ENCODE measurements at regions of chr1 and their contacts with region 1.

Region 1: DNA sequence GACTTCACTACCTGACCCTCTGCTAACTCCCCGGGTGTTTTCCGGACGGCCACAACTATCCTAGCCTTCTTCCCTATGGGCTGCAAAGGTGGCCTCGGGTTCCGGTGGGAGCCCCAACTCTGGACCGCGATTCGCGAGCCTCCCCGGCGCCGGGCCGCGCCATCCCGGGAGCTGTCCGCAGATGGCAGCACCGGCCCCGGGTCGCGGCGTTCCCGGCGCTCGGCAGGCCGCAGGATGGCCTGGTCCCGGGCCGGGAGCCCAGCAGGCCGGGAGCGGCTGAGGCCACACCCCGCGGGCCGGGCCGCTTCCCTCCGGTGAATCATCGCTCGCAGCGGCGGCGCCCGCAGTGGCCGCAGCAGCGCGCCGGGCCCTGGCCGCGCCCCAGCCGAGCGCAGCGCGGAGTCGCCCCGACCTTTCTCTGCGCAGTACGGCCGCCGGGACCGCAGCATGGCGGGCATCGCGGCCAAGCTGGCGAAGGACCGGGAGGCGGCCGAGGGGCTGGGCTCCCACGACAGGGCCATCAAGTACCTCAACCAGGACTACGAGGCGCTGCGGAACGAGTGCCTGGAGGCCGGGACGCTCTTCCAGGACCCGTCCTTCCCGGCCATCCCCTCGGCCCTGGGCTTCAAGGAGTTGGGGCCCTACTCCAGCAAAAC is at the start of gene CAPN2:
- DNase-seq: peak; percentile 88 to 97 (median 96)
- ATAC-seq: peak; percentile 91
- H3K4me3 ChIP-seq: peak within 1 kb of the TSS; percentile 75
- H3K27ac ChIP-seq: peak within 1 kb of the TSS; percentile 89
- H3K4me1 ChIP-seq: peaks cover 54 to 66% of the 10 kb centered on the region in 2 experiments
- H3K27me3 ChIP-seq: no peaks in the 10 kb centered on the region
- CTCF ChIP-seq: peak; percentile 74 to 90 (median 80)
- EP300 ChIP-seq: no peak; the same call in 1 of the 2 replicates
- POLR2A ChIP-seq: peak; percentile 75
- RAD21 ChIP-seq: peak; percentile 93 to 95
- polyA plus RNA-seq, gene CAPN2: 24.6 to 28.5 TPM

Region 2: GRCh38 chr1:223500560-223501425 is 211.5 kb before region 1 on chr1:
- CTCF ChIA-PET with region 1: no interaction called
- POLR2A ChIA-PET with region 1: no interaction called
- in situ Hi-C with region 1: no loop called
- intact Hi-C with region 1: no loop called
- DNase-seq: no peak
- ATAC-seq: no peak
- H3K4me3 ChIP-seq: no peak overlapping the region
- H3K27ac ChIP-seq: no peak overlapping the region
- H3K4me1 ChIP-seq: no peaks in the 10 kb centered on the region; a peak in 1 of 5 replicates
- H3K27me3 ChIP-seq: peaks cover 2 to 44% of the 10 kb centered on the region in 2 experiments; a peak in 2 of 5 replicates
- CTCF ChIP-seq: no peak
- EP300 ChIP-seq: no peak
- POLR2A ChIP-seq: no peak
- RAD21 ChIP-seq: no peak

Region 3: DNA sequence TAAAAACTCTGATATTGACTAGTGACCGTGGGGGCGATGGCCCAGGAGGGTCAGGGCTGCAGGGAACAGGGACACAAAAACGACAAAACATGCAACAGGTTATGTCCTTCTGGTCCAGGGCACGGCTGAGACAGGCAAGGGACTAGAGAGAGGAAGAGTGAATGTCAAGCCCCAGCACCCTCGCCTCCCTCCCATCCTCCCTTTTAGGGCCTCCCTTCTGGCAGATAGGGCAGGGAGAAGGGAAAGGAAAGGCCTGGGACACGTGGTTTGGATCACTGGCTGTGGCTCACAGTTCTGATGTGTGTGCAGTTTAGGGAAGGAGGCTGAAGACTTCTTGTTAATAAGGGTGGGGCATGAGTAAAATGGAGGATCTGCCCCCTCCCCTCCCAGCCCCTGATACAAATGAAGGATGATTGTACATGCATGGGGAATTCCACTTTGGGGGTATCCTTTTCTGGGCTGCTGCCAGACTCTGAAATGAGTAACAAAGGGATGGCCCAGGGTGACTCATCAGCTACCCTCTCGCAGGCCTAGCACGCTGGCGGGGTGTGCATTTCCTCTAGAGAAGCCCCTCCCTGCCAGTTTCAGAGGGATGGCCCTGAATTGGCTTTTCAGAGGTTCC is 14.2 kb after region 1 on chr1:
- CTCF ChIA-PET with region 1: no interaction called
- POLR2A ChIA-PET with region 1: interaction called, 11 read pairs
- in situ Hi-C with region 1: no loop called
- intact Hi-C with region 1: loop called (anchors 1 kb)
- DNase-seq: peak; percentile 88 to 92 (median 90)
- ATAC-seq: peak; percentile 90
- H3K4me3 ChIP-seq: no peak overlapping the region
- H3K27ac ChIP-seq: peak overlapping the region; percentile 81
- H3K4me1 ChIP-seq: peaks cover 19 to 29% of the 10 kb centered on the region in 2 experiments
- H3K27me3 ChIP-seq: no peaks in the 10 kb centered on the region
- CTCF ChIP-seq: no peak
- EP300 ChIP-seq: no peak
- POLR2A ChIP-seq: no peak; the same call in 1 of the 2 replicates
- RAD21 ChIP-seq: peak in 1 of 2 experiments; percentile 24; a peak in 1 of 4 replicates

Region 4: GRCh38 chr1:223741871-223742270 is 29.5 kb after region 1 on chr1:
- CTCF ChIA-PET with region 1: no interaction called
- POLR2A ChIA-PET with region 1: interaction called, 10 read pairs
- in situ Hi-C with region 1: no loop called
- intact Hi-C with region 1: no loop called
- DNase-seq: no peak
- ATAC-seq: no peak
- H3K4me3 ChIP-seq: no peak overlapping the region
- H3K27ac ChIP-seq: no peak overlapping the region
- H3K4me1 ChIP-seq: 0 out of 5 replicates have a peak, but pooled peaks cover 0 to 3% of the 10 kb centered on the region in 2 experiments
- H3K27me3 ChIP-seq: no peaks in the 10 kb centered on the region
- CTCF ChIP-seq: no peak
- EP300 ChIP-seq: no peak
- POLR2A ChIP-seq: no peak
- RAD21 ChIP-seq: no peak

Region 5: DNA sequence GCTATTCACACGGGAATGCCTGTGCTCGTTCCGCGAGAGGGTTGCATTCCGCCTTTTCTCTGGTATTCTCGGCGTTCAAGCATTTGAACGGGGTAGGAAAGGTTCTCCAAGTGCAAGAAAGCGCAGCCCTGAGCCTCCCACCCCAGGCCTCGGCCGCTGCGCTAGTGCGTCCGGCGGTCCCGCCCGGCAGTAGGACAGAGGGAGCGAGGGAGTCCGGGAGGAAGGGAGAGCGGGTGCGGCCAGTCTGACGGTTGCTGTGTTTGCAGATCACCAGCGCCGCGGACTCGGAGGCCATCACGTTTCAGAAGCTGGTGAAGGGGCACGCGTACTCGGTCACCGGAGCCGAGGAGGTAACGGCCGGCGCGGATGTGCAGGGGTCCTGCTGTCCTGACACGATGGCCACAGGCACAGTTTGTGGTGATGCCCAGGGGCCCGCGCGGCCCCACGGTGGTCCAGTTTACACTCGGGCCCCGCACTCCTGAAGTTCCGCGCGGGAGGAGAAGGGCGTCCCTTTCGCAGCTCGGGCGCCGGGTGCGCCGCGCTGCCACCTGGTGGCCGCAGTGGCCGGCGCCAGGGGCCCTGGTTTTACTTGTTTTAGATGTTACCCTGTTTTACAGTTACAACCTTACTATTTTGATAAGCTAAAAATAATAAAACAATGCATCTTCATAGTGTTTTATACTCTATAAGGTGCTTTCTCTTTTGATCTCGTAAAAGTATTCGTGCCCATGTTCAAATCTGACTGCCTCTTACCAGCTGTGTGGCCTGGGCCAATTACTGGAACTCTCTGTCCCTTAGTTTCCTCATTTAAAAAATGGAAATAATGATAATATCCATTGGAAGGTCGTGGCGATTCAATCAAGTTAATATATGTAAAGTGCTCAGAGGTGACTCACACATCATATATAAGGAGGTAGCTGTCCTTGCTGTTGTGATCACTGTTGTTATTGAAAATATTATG is 36.7 kb after region 1 on chr1:
- CTCF ChIA-PET with region 1: interaction called, 14 read pairs
- POLR2A ChIA-PET with region 1: no interaction called
- in situ Hi-C with region 1: no loop called
- intact Hi-C with region 1: loop called (anchors 1 kb)
- DNase-seq: peak; percentile 77 to 83 (median 80)
- ATAC-seq: peak; percentile 96
- H3K4me3 ChIP-seq: no peak overlapping the region
- H3K27ac ChIP-seq: no peak overlapping the region
- H3K4me1 ChIP-seq: peaks cover 0 to 13% of the 10 kb centered on the region in 2 experiments; a peak in 2 of 5 replicates
- H3K27me3 ChIP-seq: no peaks in the 10 kb centered on the region
- CTCF ChIP-seq: peak; percentile 94 to 97 (median 94)
- EP300 ChIP-seq: no peak
- POLR2A ChIP-seq: no peak
- RAD21 ChIP-seq: peak; percentile 91 to 94

Region 6: DNA sequence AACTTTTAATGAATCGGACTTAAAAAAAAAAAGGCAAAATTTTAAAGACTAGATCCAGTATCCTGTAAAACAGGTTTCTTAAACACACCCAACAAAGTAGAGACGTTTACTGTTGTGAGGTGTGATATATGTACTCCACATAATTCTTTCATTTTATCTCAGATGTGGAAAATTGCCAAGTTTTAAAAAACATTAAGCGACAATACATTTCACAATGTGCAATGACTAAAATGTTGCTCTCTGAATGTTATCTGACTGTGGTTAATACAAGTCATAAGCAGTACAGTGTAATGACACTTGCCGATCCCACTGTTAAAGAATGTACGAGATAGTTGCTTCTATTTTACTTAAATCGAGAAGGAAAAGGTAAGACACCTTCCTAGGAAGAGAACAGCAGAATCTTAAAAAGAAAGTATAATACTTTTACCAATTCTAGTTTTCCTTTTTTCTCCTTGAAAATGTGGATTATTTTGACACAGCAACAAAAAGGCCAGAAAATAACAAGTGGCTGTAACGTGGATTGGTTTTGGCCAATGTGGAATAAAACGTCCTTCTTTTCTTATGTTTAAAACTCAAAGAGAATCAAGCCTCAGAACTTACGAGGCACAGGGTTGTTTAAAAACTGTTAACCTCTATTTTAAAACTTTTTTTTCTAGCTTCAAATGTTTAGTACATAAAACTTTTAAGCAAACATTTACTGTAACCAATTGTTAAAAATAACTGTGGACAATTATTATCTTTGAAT is 82.0 kb after region 1 on chr1:
- CTCF ChIA-PET with region 1: no interaction called
- POLR2A ChIA-PET with region 1: no interaction called
- in situ Hi-C with region 1: no loop called
- intact Hi-C with region 1: loop called (anchors 5 kb)
- DNase-seq: peak in 1 of 4 experiments; percentile 33
- ATAC-seq: peak; percentile 46
- H3K4me3 ChIP-seq: no peak overlapping the region
- H3K27ac ChIP-seq: peak overlapping the region; percentile 50
- H3K4me1 ChIP-seq: peaks cover 11 to 43% of the 10 kb centered on the region in 2 experiments
- H3K27me3 ChIP-seq: no peaks in the 10 kb centered on the region
- CTCF ChIP-seq: no peak
- EP300 ChIP-seq: 0 out of 2 replicates have a peak, but pooled peaks have one; percentile 9
- POLR2A ChIP-seq: no peak
- RAD21 ChIP-seq: no peak

Region 7: DNA sequence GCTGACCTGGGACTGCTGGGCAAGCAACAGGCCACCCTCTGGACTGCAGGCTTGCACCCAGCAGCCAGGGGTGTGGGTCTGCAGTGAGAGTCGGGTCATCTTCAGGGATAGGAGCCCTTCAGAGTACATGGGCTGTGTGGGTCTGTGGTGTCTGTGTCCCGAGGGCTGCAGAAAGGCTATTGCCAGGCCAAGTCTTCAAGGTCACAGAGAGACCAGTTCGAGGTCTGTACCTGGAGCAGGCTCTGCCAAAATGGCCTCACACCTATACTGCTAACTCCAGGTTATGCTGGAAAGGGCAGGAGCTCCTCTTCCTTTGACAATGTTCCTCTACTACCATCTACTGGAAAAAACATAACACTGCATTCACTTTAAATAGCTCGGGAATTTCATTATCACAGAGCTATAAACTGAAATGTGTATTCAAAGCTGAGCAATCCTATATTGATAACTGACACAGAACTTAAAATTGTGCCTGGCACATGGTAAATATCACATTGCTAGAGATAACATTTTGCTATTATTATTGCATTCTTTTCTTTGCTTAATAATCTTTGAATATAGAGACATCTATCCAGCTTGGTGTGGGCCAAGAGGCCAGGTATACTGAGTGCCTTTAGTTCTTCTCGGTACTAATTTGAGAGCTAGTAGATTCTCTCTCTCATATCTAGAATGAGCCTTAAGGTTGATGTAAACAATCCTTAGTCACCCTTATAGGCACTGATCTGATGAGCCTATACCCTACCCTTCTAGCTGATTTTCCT is 1210.3 kb after region 1 on chr1:
- CTCF ChIA-PET with region 1: no interaction called
- POLR2A ChIA-PET with region 1: no interaction called
- in situ Hi-C with region 1: no loop called
- intact Hi-C with region 1: loop called (anchors 10 kb)
- DNase-seq: peak; percentile 51 to 64 (median 56)
- ATAC-seq: peak; percentile 92
- H3K4me3 ChIP-seq: no peak overlapping the region
- H3K27ac ChIP-seq: no peak overlapping the region
- H3K4me1 ChIP-seq: no peaks in the 10 kb centered on the region
- H3K27me3 ChIP-seq: peaks cover 10 to 16% of the 10 kb centered on the region in 2 experiments
- CTCF ChIP-seq: peak; percentile 63 to 90 (median 76)
- EP300 ChIP-seq: no peak
- POLR2A ChIP-seq: no peak
- RAD21 ChIP-seq: peak; percentile 82 to 89